ENCODE measurements at regions of chr2 and their contacts with region 1.

Region 1: DNA sequence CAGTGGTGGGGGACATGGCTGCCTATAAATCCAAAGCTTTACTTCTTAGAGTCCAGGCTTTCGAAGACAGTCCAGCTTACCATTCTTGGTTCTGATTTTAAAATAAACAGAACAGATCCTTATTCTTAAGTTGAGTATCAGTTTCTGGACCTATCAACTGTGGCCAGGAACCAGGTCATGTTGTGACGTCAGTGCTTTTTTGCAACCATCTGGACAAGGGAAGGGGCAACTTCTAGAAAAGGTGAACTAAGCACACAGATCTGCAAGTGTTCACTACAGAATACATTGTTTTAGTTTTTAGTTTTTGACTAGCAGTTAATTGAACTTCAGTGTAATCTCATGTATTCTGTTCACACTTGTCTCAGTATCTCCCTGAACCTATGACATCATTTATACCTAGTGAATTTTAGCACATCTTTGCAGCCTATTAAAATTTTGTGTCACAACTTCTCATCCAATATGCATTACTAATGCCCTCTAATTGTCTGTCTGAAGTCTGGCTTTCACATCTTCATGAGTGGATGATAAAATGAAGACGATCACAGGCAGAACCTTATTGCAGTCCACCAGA is 325.9 kb upstream of the MGAT5 start:
- DNase-seq: no peak
- ATAC-seq: no peak
- H3K4me3 Mint-ChIP-seq: no peak overlapping the region
- H3K27ac Mint-ChIP-seq: no peak overlapping the region
- H3K4me1 Mint-ChIP-seq: no peaks in the 10 kb centered on the region
- H3K27me3 Mint-ChIP-seq: peaks cover 24% of the 10 kb centered on the region

Region 2: DNA sequence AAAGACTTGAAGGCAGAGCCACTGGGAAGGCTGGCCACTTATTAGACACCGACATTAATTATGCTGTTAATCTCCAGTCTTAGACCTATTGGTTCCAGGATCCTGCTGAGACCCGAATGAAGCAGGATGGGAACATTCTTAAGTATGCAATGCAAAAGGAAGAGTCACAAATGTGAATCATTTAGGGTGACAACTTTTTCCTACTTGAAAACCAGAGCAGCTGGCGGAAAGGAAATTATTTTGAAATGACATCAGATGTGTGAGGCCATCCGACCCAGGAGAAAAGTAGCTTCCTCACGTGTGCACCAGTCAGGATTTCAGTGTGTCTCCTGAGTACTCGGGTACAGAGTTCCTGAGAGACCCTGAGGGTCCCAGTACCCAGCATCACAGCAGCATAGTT is 136.8 kb before region 1 on chr2:
- CTCF ChIA-PET with region 1: no interaction called
- POLR2A ChIA-PET with region 1: no interaction called
- intact Hi-C with region 1: no loop called
- DNase-seq: no peak
- ATAC-seq: no peak
- H3K4me3 Mint-ChIP-seq: no peak overlapping the region
- H3K27ac Mint-ChIP-seq: no peak overlapping the region
- H3K4me1 Mint-ChIP-seq: no peaks in the 10 kb centered on the region
- H3K27me3 Mint-ChIP-seq: peaks cover 11% of the 10 kb centered on the region

Region 3: DNA sequence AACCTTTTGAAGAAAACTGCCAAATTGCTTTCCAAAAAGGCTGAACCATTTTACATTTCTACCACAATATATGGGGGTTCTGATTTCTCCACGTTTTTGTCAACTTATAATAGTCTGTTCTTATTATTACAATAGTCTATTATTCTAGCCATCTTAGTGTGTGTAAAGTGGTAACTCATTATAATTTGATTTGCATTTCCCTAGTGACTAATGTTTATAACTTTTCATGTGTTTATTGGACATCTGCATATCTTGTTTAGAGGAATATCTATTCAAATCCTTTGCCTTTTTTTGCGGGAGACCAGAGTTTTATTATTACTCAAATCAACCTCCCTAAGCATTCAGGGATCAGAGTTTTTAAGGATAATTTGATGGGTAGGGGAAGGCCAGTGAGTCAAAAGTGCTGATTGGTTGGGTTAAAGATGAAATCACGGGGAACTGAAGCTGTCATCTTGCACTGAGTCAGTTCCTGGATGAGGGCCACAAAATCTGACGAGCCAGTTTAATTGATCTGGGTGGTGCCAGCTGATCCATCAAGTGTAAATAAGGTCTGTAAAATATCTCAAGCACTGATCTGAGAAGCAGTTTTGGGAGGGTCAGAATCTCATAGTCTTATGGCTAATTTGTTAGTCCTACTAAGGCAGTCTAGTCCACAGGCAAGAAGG is 56.3 kb before region 1 on chr2:
- CTCF ChIA-PET with region 1: no interaction called
- POLR2A ChIA-PET with region 1: no interaction called
- intact Hi-C with region 1: no loop called
- DNase-seq: no peak
- ATAC-seq: no peak
- H3K4me3 Mint-ChIP-seq: no peak overlapping the region
- H3K27ac Mint-ChIP-seq: no peak overlapping the region
- H3K4me1 Mint-ChIP-seq: no peaks in the 10 kb centered on the region
- H3K27me3 Mint-ChIP-seq: peaks cover 20% of the 10 kb centered on the region

Region 4: DNA sequence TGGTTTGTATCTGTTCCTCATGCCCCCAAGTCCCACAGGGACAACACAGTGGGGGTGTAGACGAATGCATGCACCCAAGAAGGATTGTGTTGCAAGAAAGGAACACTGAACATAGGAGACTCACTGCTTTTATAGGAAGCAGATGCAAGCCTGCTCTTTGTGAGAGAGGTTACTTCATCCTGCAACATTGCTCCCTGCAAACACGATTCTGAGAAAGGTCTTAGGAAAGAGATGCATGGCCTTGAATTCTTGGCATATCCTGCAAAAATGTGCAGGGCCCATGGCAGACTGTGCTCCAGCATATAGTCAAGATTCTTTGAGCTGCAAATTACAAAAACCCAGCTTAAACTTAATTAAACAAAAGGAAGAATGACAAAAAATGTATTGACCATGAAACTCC is 13.7 kb after region 1 on chr2:
- CTCF ChIA-PET with region 1: no interaction called
- POLR2A ChIA-PET with region 1: no interaction called
- intact Hi-C with region 1: loop called in 1 of 2 experiments (anchors 1 kb)
- DNase-seq: no peak
- ATAC-seq: no peak
- H3K4me3 Mint-ChIP-seq: no peak overlapping the region
- H3K27ac Mint-ChIP-seq: no peak overlapping the region
- H3K4me1 Mint-ChIP-seq: no peaks in the 10 kb centered on the region
- H3K27me3 Mint-ChIP-seq: peaks cover 12% of the 10 kb centered on the region

Measured in activated CD4-positive, alpha-beta T cell treated with anti-CD3 and anti-CD28 coated beads for 36 hours (primary cell).